Calu3 (cell line): ENCODE measurements at regions of chr10 and their contacts with region 1.

Region 1: GRCh38 chr10:70493660-70494234 is 15.2 kb downstream of the PALD1 start:
- DNase-seq: no peak
- H3K4me3 Mint-ChIP-seq: no peak overlapping the region
- H3K27ac Mint-ChIP-seq: no peak overlapping the region
- H3K4me1 Mint-ChIP-seq: no peaks in the 10 kb centered on the region
- H3K27me3 Mint-ChIP-seq: peaks cover 66% of the 10 kb centered on the region
- CTCF ChIP-seq: no peak

Region 2: DNA sequence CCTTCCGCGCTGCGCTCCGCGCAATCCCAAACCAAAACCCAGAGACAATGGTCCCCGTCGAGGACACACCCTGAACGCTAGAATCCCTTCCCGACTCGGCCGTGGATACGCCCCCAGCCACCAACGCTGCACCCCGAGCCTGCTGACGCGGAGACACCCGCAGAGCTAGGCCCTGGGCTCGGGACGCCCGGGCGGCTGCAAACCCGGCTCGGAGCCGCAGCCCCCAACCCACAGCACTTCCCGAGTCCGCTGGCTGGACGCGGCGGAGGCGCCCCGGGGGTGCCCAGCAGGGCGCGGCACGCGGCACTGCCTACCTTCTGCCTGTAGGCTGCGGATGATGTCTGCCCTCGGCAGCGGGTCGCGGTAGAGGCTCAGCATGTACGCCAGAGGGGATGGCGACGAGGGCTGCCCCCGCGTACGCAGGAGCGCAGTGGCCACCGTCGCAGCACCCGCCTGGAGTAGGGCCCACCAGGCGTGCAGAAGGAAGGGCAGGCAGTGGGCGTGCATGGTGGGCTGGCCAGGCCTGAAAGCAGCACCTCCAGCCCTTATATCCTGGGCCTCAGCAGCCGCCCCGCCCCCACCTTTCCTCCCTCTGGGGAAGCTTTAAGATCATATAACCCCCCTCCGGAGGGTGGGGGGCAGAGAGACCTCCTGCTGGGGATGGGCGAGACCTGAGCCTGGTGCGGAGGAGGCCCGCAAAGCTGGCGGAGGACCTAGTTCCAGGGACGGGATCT is 52.4 kb before region 1 on chr10 and contains the start of gene NODAL:
- CTCF ChIA-PET with region 1: no interaction called
- intact Hi-C with region 1: no loop called
- DNase-seq: no peak
- H3K4me3 Mint-ChIP-seq: peak within 1 kb of the TSS; percentile 41
- H3K27ac Mint-ChIP-seq: no peak within 1 kb of the TSS
- H3K4me1 Mint-ChIP-seq: peaks cover 8% of the 10 kb centered on the region
- H3K27me3 Mint-ChIP-seq: peaks cover 66% of the 10 kb centered on the region
- CTCF ChIP-seq: no peak
- total RNA-seq, gene NODAL: not detected in 2 replicates

Region 3: DNA sequence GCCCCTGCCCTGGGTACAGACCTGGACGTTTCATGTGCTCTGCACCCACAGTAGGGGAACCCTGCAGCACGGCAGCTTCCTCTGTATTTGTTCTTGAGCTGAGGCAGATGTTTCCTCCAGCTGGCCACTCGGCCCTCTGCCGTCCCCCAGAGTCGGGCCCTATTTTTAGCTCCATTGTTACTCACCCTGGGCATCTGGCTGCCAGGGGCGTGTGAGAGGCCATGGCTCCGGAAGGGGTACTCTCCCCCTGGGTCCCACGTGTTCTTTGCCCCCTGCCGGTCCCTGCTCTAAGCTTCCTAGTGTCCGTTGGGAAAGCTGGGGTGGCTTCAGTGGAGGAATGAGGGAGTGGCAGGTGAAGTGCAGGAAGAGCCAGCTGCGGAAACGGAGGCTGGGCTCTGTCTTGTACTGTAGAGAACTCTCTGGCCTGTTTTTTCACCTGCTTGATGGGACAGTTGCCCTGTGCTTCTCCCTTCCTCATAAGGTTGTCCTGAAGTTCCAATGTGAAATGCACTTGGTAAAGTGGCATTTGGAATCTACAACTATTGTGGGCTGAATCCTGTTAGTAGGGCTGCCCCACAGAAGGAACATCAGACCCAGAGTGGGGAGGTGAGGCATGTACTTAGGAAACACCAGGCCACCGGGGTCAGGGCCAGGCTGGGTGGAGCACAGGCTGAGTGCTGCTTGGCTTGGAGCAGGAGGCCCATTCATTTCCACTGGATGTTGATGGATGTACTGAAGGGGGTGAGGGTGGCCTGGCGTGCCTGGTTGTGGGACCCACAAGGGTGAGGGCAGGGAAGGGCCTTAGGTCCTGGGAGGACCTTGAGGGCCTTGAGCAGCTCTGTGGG is 15.4 kb after region 1 on chr10:
- CTCF ChIA-PET with region 1: interaction called, 3 read pairs
- intact Hi-C with region 1: loop called (anchors 1 kb)
- DNase-seq: no peak
- H3K4me3 Mint-ChIP-seq: no peak overlapping the region
- H3K27ac Mint-ChIP-seq: no peak overlapping the region
- H3K4me1 Mint-ChIP-seq: no peaks in the 10 kb centered on the region
- H3K27me3 Mint-ChIP-seq: peaks cover 51% of the 10 kb centered on the region
- CTCF ChIP-seq: no peak

Region 4: DNA sequence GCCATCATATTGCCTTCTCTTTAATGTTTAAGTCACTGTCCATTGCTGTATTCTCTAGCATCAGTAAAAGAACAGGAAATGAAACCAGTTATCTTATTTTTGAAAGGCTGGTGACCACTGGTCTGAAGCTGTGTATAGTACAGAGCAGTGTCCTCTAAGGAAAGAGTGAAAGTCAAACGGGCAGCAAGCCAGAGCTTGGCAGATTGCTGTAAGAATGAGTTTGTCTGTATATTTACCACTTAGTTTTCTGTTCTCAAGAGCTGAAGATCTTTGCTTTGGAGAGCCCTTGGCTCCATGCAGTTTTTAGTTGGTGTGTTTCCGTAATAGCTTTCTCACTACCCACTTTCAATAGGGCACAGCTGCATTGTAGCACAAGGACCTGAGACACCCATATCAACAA is 362.7 kb after region 1 on chr10:
- CTCF ChIA-PET with region 1: no interaction called
- intact Hi-C with region 1: no loop called
- DNase-seq: no peak
- H3K4me3 Mint-ChIP-seq: no peak overlapping the region
- H3K27ac Mint-ChIP-seq: no peak overlapping the region
- H3K4me1 Mint-ChIP-seq: no peaks in the 10 kb centered on the region
- H3K27me3 Mint-ChIP-seq: no peaks in the 10 kb centered on the region
- CTCF ChIP-seq: no peak

Region 5: DNA sequence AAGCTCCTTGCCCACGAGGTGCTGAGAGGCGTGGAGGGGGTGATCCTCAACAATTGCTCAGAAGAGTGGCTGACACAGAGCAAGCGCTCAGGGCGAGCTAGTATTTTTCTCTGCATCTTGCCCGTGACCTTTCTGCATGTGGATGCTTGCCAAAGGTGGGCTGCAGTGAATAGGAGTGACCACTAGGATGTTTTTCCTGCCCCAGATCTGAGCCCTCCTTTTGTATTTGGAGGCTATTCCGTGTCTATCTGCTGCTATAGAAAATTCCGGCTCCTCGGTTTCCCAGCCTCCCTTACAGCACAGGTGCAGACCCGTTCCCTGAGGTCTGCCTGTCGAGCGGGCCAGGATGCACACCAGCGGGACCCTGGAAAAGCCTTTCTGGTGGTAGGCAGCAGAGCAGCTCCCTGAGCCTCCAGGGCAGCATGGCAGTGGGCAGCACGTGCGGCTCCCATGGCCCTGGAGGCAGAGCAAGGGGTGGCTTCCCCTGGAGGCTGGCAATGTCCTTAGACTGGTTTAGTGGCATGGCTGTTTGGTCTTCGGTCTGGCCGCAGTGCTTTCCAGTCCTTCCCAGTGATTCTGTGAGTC is 539.7 kb after region 1 on chr10:
- CTCF ChIA-PET with region 1: no interaction called
- intact Hi-C with region 1: no loop called
- DNase-seq: no peak
- H3K4me3 Mint-ChIP-seq: no peak overlapping the region
- H3K27ac Mint-ChIP-seq: no peak overlapping the region
- H3K4me1 Mint-ChIP-seq: no peaks in the 10 kb centered on the region
- H3K27me3 Mint-ChIP-seq: peaks cover 57% of the 10 kb centered on the region
- CTCF ChIP-seq: no peak